ENCODE measurements at regions of chr14 and their contacts with region 1.

Region 1: DNA sequence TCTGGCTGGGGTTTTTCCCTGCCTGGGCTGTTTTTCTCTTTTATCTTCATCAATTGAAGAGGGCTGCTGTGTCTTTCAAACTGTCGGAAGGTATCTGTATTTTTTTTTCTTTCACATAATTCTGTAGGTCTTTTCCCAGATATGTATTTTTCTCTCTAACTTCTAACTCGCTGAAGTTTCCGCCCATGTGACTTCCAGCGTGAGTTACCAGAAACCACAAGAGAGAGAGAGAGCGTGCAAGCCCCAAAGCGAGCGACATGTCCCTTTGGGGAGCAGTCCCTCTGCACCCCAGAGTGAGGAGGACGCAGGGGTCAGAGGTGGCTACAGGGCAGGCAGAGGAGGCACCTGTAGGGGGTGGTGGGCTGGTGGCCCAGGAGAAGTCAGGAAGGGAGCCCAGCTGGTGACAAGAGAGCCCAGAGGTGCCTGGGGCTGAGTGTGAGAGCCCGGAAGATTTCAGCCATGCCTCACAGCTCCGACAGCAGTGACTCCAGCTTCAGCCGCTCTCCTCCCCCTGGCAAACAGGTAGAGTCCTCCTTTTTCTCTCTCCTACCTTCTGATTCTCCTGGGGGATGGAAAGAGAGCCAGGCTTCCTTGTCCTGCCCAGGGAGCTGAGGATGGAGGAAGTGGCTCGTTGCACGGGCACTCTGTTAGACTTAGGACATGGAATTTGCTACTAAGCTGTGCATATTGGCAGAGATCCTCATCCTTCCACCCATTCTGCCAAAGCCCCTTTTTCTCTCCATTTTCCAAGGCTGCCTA is at the start of gene BATF:
- DNase-seq: peak; percentile 76
- H3K4me3 Mint-ChIP-seq: peak within 1 kb of the TSS; percentile 100
- H3K27ac Mint-ChIP-seq: peak within 1 kb of the TSS; percentile 99
- H3K4me1 Mint-ChIP-seq: peaks cover 66% of the 10 kb centered on the region
- H3K27me3 Mint-ChIP-seq: no peaks in the 10 kb centered on the region
- total RNA-seq, gene BATF: 152 and 154 TPM in 2 replicates

Region 2: DNA sequence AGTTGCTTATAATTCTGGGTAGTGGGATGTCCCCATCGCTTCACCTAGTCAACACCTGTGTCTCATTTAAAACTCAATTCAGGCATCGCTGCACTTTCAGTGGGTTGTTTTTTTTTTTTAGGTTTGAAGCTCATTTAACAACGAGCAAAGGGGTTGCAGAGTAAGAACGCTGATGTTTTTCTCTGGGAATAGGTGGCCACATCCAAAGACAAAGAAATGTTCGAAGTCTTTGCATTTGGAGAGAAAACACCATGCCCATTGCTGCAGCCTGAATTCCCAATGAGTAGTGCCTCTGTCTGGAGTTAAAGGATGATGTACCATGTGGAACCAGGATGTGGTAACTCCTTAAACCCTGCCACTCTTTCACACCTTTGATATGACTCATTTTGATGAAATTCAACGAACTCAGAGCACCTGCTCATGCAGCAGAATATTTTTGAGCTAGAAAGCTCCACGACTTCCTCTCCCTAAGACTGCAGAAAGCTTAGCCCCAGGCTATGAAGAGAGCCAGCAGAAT is 35.2 kb before region 1 on chr14:
- intact Hi-C with region 1: loop called (anchors 5 kb)
- DNase-seq: peak; percentile 25
- H3K4me3 Mint-ChIP-seq: no peak overlapping the region
- H3K27ac Mint-ChIP-seq: no peak overlapping the region
- H3K4me1 Mint-ChIP-seq: peaks cover 38% of the 10 kb centered on the region
- H3K27me3 Mint-ChIP-seq: no peaks in the 10 kb centered on the region

Region 3: GRCh38 chr14:75560962-75561432 is 38.6 kb after region 1 on chr14:
- intact Hi-C with region 1: loop called (anchors 1 kb)
- DNase-seq: no peak
- H3K4me3 Mint-ChIP-seq: no peak overlapping the region
- H3K27ac Mint-ChIP-seq: peak overlapping the region; percentile 89
- H3K4me1 Mint-ChIP-seq: peaks cover 63% of the 10 kb centered on the region
- H3K27me3 Mint-ChIP-seq: no peaks in the 10 kb centered on the region